SK-N-SH (cell line): ENCODE measurements at regions of chr14 and their contacts with region 1.

Region 1: GRCh38 chr14:74905375-74906142 is 17.5 kb downstream of the RPS6KL1 start:
- DNase-seq: peak; percentile 86
- H3K4me3 ChIP-seq: no peak overlapping the region; a peak in 1 of 4 replicates
- H3K27ac ChIP-seq: peak overlapping the region in 1 of 2 experiments; percentile 39; a peak in 2 of 4 replicates
- H3K4me1 ChIP-seq: no peaks in the 10 kb centered on the region; a peak in 1 of 4 replicates
- H3K27me3 ChIP-seq: no peaks in the 10 kb centered on the region
- CTCF ChIP-seq: peak; percentile 97
- EP300 ChIP-seq: no peak
- RAD21 ChIP-seq: peak; percentile 73

Region 2: GRCh38 chr14:74860906-74861733 is 44.4 kb before region 1 on chr14:
- CTCF ChIA-PET with region 1: interaction called, 537 read pairs
- POLR2A ChIA-PET with region 1: interaction called, 8 read pairs
- DNase-seq: peak; percentile 82
- H3K4me3 ChIP-seq: no peak overlapping the region
- H3K27ac ChIP-seq: no peak overlapping the region
- H3K4me1 ChIP-seq: no peaks in the 10 kb centered on the region; a peak in 1 of 4 replicates
- H3K27me3 ChIP-seq: no peaks in the 10 kb centered on the region
- CTCF ChIP-seq: peak; percentile 87
- EP300 ChIP-seq: no peak
- RAD21 ChIP-seq: peak; percentile 94

Region 3: GRCh38 chr14:74881431-74882361 is 23.9 kb before region 1 on chr14 and contains the start of gene DLST:
- CTCF ChIA-PET with region 1: interaction called, 134 read pairs
- POLR2A ChIA-PET with region 1: interaction called, 3 read pairs
- DNase-seq: peak; percentile 99
- H3K4me3 ChIP-seq: peak within 1 kb of the TSS; percentile 86 to 92
- H3K27ac ChIP-seq: peak within 1 kb of the TSS; percentile 80 to 88
- H3K4me1 ChIP-seq: peaks cover 0 to 21% of the 10 kb centered on the region in 2 experiments; a peak in 2 of 4 replicates
- H3K27me3 ChIP-seq: no peaks in the 10 kb centered on the region
- CTCF ChIP-seq: no peak
- EP300 ChIP-seq: no peak
- RAD21 ChIP-seq: no peak
- polyA plus RNA-seq, gene DLST: 92.3 and 117 TPM in 2 replicates

Region 4: DNA sequence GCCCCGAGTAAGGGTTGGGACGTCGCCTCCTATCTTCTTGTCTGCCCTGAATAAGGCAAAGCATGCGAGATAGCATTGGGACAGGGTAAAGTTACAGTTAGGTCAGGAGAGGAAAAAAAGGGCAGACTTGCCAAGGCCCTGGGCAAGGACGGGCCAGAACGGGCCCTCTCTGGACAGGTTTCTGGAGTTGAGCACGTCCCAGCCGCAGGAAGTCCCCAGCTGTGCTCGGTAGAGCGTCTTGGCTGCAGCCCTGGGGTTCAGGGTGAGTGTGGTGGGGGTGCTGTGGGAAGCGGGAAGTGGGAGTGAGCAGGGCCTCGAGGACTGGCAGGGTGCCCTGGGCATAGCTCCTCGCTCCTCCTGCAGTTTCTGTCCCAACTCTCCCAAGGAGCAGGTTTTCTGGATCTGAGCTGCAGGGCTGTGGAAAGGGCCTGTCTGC is 12.1 kb after region 1 on chr14:
- CTCF ChIA-PET with region 1: interaction called, 17 read pairs
- POLR2A ChIA-PET with region 1: interaction called, 4 read pairs
- DNase-seq: no peak
- H3K4me3 ChIP-seq: no peak overlapping the region
- H3K27ac ChIP-seq: no peak overlapping the region
- H3K4me1 ChIP-seq: no peaks in the 10 kb centered on the region; a peak in 1 of 4 replicates
- H3K27me3 ChIP-seq: no peaks in the 10 kb centered on the region
- CTCF ChIP-seq: no peak
- EP300 ChIP-seq: no peak
- RAD21 ChIP-seq: no peak

Region 5: DNA sequence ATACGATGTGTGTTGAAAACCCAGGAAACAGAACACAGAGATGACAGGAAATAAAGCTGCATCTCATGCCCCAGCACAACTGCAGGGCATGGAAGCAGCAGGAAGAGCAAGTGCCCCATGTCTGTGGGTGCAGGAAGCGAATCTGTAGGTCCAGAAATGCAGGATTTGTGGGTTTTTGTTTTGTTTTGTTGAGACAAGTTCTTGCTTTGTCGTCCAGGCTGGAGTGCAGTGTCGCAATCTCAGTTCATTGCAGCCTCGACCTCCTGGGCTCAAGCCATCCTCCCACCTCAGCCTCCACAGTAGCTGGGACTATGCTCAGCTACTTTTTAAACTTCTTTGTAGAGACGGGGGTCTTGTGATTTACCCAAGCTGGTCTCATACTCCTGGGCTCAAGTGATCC is 23.7 kb after region 1 on chr14:
- CTCF ChIA-PET with region 1: interaction called, 14 read pairs
- POLR2A ChIA-PET with region 1: no interaction called
- DNase-seq: no peak
- H3K4me3 ChIP-seq: no peak overlapping the region
- H3K27ac ChIP-seq: no peak overlapping the region
- H3K4me1 ChIP-seq: no peaks in the 10 kb centered on the region
- H3K27me3 ChIP-seq: peaks cover 6% of the 10 kb centered on the region; the same call in 1 of the 2 replicates
- CTCF ChIP-seq: no peak
- EP300 ChIP-seq: no peak
- RAD21 ChIP-seq: no peak

Region 6: GRCh38 chr14:75158843-75159614 is 253.5 kb after region 1 on chr14:
- CTCF ChIA-PET with region 1: no interaction called
- POLR2A ChIA-PET with region 1: no interaction called
- DNase-seq: no peak
- H3K4me3 ChIP-seq: no peak overlapping the region
- H3K27ac ChIP-seq: no peak overlapping the region
- H3K4me1 ChIP-seq: no peaks in the 10 kb centered on the region
- H3K27me3 ChIP-seq: no peaks in the 10 kb centered on the region
- CTCF ChIP-seq: no peak
- EP300 ChIP-seq: no peak
- RAD21 ChIP-seq: no peak